ENCODE measurements at regions of chr5 and their contacts with region 1.

Region 1: DNA sequence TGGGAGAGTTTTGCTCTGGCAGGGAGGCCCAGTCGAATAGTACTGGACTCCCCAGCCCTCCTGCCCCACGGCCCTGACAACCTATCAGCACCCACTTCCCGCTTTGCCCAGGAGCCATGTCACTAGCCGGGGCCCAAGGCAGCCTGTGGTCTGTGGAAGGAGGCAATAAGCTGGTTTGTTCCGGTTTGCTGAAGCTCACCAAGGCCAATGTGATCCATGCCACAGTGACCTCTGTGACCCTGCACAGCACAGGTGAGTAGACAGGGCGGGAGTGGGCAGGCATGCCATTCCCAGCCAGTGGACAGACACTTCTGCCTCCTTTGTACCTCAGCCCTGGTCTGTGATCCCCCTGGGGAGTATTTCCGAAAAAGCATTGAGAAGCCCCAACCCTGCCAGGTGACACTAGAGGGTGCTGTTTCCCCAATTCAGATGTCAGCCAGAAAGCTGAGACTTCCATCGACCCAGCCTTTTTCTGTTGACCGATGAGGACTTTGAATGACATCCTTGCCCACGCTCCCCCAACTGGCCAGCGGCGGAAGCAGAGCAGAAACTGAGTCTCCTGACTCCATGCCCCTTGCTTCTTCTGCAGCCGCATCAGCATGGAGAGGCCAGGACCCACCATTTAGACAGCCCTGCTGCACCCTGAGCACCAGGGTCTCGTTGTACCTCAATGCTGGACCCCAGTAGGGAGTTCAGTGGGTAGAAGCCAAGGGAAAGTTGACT is 9.6 kb downstream of the PCYOX1L start:
- DNase-seq: peak; percentile 64
- H3K4me3 Mint-ChIP-seq: no peak overlapping the region
- H3K27ac Mint-ChIP-seq: peak overlapping the region; percentile 34
- H3K4me1 Mint-ChIP-seq: peaks cover 12% of the 10 kb centered on the region
- H3K27me3 Mint-ChIP-seq: no peaks in the 10 kb centered on the region

Region 2: GRCh38 chr5:149310947-149311658 is 56.3 kb before region 1 on chr5:
- CTCF ChIA-PET with region 1: interaction called, 12 read pairs
- POLR2A ChIA-PET with region 1: no interaction called
- DNase-seq: no peak
- H3K4me3 Mint-ChIP-seq: no peak overlapping the region
- H3K27ac Mint-ChIP-seq: no peak overlapping the region
- H3K4me1 Mint-ChIP-seq: no peaks in the 10 kb centered on the region
- H3K27me3 Mint-ChIP-seq: no peaks in the 10 kb centered on the region

Region 3: GRCh38 chr5:149317281-149318048 is 49.9 kb before region 1 on chr5:
- CTCF ChIA-PET with region 1: interaction called, 14 read pairs
- POLR2A ChIA-PET with region 1: no interaction called
- DNase-seq: peak; percentile 53
- H3K4me3 Mint-ChIP-seq: no peak overlapping the region
- H3K27ac Mint-ChIP-seq: no peak overlapping the region
- H3K4me1 Mint-ChIP-seq: peaks cover 3% of the 10 kb centered on the region
- H3K27me3 Mint-ChIP-seq: no peaks in the 10 kb centered on the region

Region 4: GRCh38 chr5:149381987-149382340 is 14.6 kb after region 1 on chr5:
- CTCF ChIA-PET with region 1: interaction called, 22 read pairs
- POLR2A ChIA-PET with region 1: no interaction called
- DNase-seq: peak; percentile 77
- H3K4me3 Mint-ChIP-seq: no peak overlapping the region
- H3K27ac Mint-ChIP-seq: no peak overlapping the region
- H3K4me1 Mint-ChIP-seq: no peaks in the 10 kb centered on the region
- H3K27me3 Mint-ChIP-seq: no peaks in the 10 kb centered on the region

Measured in activated CD4-positive, alpha-beta T cell treated with anti-CD3 and anti-CD28 coated beads, Interleukin-2, amount 10 ng/mL, durations not matched to agents 7 days and 5 days (primary cell).